ENCODE measurements at regions of chrX and their contacts with region 1.

Region 1: DNA sequence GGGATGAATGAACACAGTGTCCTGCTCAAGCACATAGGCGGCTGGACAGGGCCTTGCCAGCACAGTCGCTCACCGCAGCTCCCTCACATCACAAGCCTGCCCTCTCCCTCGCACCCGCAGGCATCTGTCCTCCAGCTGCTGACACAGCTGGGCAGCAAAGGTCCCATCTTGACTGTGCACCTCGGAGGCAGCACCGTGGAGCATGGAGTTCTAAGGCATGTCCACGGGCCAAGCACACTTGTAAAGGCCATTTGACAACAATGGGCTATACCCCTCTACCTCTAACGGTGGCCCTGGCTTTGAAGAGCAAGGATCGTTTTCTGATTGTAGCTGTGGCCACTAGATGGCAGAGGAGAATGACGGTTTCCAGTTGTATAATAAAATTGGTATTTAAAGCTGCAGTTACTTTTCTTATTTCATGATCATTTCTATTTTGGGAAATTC is 53.8 kb downstream of the APLN start:
- DNase-seq: peak; percentile 32 to 48
- H3K4me3 ChIP-seq: no peak overlapping the region
- H3K4me1 ChIP-seq: peaks cover 13% of the 10 kb centered on the region
- H3K27me3 ChIP-seq: no peaks in the 10 kb centered on the region

Region 2: DNA sequence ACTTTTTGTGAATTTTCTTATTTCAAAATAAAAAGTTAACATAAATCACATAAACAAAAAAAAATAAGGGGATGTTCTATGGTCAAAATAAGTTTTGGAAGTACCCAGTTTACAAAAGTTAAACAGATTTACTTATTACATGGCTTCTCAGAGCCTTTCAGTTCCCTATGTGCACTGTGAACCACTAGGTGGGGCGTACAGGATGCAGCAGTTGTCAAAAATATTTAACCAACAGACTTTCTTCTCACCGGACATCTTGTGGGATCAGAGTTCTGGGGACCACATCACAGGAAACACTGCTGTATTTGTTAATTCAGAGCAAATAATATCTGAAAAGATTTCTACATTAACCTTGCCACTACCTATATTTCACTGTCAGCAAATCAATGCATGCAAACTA is 151.9 kb before region 1 on chrX:
- in situ Hi-C with region 1: no loop called
- DNase-seq: no peak
- H3K4me3 ChIP-seq: no peak overlapping the region
- H3K4me1 ChIP-seq: peaks cover 16% of the 10 kb centered on the region
- H3K27me3 ChIP-seq: no peaks in the 10 kb centered on the region

Region 3: GRCh38 chrX:130060122-130061069 is 459.4 kb after region 1 on chrX:
- in situ Hi-C with region 1: loop called (anchors 5 kb)
- DNase-seq: peak; percentile 76 to 93
- H3K4me3 ChIP-seq: peak overlapping the region; percentile 44
- H3K4me1 ChIP-seq: peaks cover 15% of the 10 kb centered on the region
- H3K27me3 ChIP-seq: no peaks in the 10 kb centered on the region

Measured in HAP-1 (cell line).